Activated T-helper 1 cell treated with anti-CD3 and anti-CD28 coated beads, Interleukin-12 subunit alpha, Interleukin-12 subunit beta, Interleukin-2, Interleukin-4 antibody, amounts not matched to agents 30 ng/mL and 10 ng/mL and 1 ng/mL, durations not matched to agents 14 hours and 24 hours and 36 hours (primary cell): ENCODE measurements at regions of chr11 and their contacts with region 1.

Region 1: DNA sequence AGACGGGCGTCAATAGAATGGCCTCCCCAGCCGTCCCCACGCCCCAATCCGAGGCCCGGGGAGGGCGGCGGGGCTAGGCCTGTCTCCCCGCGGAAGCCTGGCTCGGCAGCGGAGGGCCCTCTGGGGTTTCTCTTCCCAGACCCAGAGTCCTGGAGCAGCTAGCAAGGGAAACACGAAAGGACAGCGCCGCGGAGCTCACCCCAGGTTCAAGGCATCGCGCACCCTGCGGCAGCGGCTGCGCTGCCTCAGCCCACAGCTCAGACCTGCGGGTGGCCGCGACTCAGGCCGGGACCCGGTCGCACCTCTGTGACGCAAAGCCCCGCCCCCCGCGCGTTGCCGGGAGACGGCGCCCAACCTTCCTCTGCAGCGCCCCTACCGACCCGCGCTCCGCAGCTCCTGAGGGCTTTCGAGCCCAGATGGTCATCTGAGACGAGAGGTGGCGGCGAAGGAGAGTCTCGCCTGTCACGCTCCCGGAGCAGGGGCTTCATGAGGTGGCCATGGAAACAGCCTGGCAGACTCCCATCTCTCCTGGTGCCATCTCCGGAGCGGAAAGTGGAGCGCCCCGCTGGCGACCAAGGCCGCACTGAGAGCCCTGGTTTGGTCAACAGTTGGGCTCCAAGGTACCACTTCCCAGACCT is at the start of gene RNF141:
- DNase-seq: peak; percentile 92
- H3K4me3 Mint-ChIP-seq: peak within 1 kb of the TSS; percentile 90
- H3K27ac Mint-ChIP-seq: peak within 1 kb of the TSS; percentile 73
- H3K4me1 Mint-ChIP-seq: peaks cover 29% of the 10 kb centered on the region
- H3K27me3 Mint-ChIP-seq: peaks cover 5% of the 10 kb centered on the region
- total RNA-seq, gene RNF141: 12.4 and 13.2 TPM in 2 replicates

Region 2: GRCh38 chr11:9363954-9364912 is 1176.8 kb before region 1 on chr11:
- intact Hi-C with region 1: loop called (anchors 5 kb)
- DNase-seq: peak; percentile 76
- H3K4me3 Mint-ChIP-seq: peak overlapping the region; percentile 82
- H3K27ac Mint-ChIP-seq: peak overlapping the region; percentile 90
- H3K4me1 Mint-ChIP-seq: peaks cover 28% of the 10 kb centered on the region
- H3K27me3 Mint-ChIP-seq: peaks cover 5% of the 10 kb centered on the region

Region 3: GRCh38 chr11:10405855-10406592 is 135.0 kb before region 1 on chr11:
- intact Hi-C with region 1: loop called (anchors 2 kb)
- DNase-seq: peak; percentile 16
- H3K4me3 Mint-ChIP-seq: no peak overlapping the region
- H3K27ac Mint-ChIP-seq: no peak overlapping the region
- H3K4me1 Mint-ChIP-seq: peaks cover 25% of the 10 kb centered on the region
- H3K27me3 Mint-ChIP-seq: peaks cover 6% of the 10 kb centered on the region

Region 4: GRCh38 chr11:10518891-10519290 is 22.2 kb before region 1 on chr11:
- intact Hi-C with region 1: no loop called
- DNase-seq: no peak
- H3K4me3 Mint-ChIP-seq: no peak overlapping the region
- H3K27ac Mint-ChIP-seq: no peak overlapping the region
- H3K4me1 Mint-ChIP-seq: no peaks in the 10 kb centered on the region
- H3K27me3 Mint-ChIP-seq: no peaks in the 10 kb centered on the region

Region 5: GRCh38 chr11:10653926-10654810 is 113.1 kb after region 1 on chr11:
- intact Hi-C with region 1: loop called (anchors 5 kb)
- DNase-seq: peak; percentile 16
- H3K4me3 Mint-ChIP-seq: no peak overlapping the region
- H3K27ac Mint-ChIP-seq: no peak overlapping the region
- H3K4me1 Mint-ChIP-seq: peaks cover 33% of the 10 kb centered on the region
- H3K27me3 Mint-ChIP-seq: peaks cover 2% of the 10 kb centered on the region

Region 6: DNA sequence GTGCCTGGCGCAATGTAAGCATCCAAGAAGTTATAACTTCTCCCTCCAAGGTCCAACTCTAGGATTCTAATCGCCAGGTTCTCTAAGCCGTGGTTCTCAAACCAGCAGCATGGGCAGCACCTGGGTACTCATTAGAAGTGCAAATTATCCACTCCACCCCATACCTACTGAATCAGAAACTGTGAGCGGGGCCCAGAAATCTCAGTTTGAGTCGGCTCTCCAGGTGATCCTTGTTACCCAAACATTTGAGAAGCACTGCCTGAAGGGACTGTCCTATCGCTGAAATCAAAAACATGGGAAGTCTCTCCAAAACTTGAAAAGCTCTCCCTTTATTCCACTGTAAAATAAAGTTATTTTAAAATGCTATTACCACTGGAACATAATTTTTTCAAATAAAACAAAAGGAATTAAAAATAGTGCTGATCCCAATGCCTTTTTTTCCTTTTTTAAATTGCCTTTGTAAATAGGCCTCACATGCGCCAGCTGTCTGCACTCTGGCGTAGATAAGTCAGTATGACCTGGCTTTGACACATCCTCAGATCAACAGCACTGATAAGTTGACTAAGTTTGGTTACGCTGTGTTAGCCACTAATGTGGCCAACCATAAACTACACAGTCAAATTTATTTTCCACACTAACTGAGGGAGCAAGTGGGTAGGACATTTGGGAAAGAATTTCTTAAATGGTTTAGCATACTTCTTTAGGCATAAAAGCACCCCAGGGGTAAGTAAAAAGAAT is 201.6 kb after region 1 on chr11:
- intact Hi-C with region 1: loop called (anchors 2 kb)
- DNase-seq: peak; percentile 17
- H3K4me3 Mint-ChIP-seq: peak overlapping the region; percentile 27
- H3K27ac Mint-ChIP-seq: peak overlapping the region; percentile 7
- H3K4me1 Mint-ChIP-seq: peaks cover 35% of the 10 kb centered on the region
- H3K27me3 Mint-ChIP-seq: no peaks in the 10 kb centered on the region

Region 7: DNA sequence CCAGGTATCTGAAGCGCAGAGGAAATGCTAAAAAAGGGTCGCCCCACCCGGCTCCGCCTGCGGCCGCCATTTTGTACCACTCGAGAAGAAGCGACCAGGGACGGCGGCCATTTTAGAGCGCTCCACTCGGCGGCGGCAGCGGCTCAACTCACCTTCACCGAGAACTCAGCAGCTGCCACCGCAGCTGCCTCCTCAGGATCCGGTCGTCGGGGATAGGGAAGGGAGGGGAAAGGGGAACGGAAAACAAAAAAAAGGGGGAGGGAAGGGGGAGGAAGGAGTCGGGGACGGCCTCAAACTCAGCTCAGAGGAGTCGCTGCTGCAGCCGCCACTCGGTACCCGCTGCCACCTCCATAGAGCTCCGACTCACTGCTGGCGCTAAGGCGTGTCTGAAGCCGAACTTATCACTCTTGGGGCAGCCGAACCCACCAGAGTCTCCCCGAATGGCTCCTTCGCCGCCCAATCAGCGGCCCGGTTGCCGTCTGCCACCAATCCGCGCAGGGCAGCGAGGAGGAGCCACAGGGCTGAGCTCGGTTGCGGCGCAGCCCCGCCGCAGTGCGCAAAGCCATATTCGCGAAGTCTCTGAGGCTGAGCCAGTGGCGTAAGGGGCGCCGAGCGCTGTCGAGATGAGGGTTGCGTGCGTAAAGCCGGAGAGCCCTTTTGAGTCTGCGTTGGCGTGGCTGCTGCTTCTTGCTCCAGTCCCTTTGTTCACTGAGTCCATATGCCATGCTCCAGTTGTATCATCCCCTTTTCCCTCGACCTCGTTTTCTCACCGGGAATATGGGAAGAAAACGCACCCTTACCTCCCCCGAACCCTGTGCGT is 267.7 kb after region 1 on chr11 and contains the start of gene EIF4G2:
- intact Hi-C with region 1: loop called (anchors 2 kb)
- DNase-seq: peak; percentile 98
- H3K4me3 Mint-ChIP-seq: peak within 1 kb of the TSS; percentile 95
- H3K27ac Mint-ChIP-seq: peak within 1 kb of the TSS; percentile 98
- H3K4me1 Mint-ChIP-seq: peaks cover 43% of the 10 kb centered on the region
- H3K27me3 Mint-ChIP-seq: no peaks in the 10 kb centered on the region
- total RNA-seq, gene EIF4G2: 1,084 and 1,108 TPM in 2 replicates

Region 8: GRCh38 chr11:12343526-12343925 is 1802.5 kb after region 1 on chr11:
- intact Hi-C with region 1: no loop called
- DNase-seq: no peak
- H3K4me3 Mint-ChIP-seq: no peak overlapping the region
- H3K27ac Mint-ChIP-seq: no peak overlapping the region
- H3K4me1 Mint-ChIP-seq: no peaks in the 10 kb centered on the region
- H3K27me3 Mint-ChIP-seq: peaks cover 2% of the 10 kb centered on the region